Activated naive CD4-positive, alpha-beta T cell treated with anti-CD3 and anti-CD28 coated beads for 36 hours (primary cell): ENCODE measurements at regions of chr21 and their contacts with region 1.

Region 1: DNA sequence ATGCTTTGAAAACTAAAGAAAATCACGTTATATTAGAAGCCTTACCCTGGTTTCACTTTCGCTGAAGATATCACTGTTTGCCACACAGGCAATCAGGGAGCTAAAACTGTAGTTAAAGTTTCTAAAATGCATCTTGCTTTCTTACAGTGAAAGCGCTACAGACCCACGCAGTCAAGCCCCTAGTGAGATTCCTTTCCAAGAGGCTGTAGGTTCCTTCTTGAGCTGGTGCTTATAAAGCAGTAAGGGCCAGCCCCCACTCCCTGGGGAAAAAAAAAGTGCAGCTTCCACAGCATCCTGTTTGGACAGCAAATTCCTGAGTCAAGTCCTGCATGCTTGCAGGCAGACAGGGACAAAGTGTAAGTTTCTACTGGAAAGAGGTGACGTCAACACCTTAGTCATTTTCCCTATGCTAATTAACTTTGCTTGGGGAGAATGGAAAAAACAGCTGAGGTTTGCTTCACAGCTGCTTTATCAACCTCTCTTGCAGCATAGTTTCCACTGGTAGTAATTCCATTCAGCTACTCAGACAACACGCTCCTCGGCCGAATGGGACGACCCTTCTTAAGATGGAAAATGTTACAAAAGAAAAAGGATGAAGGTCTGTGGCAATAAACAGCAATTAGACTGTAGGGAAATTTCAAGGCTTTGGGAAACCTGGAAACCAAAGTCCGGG is 14.7 kb upstream of the KCNE1 start:
- DNase-seq: peak; percentile 57
- H3K4me3 Mint-ChIP-seq: peak overlapping the region; percentile 55
- H3K27ac Mint-ChIP-seq: peak overlapping the region; percentile 56
- H3K4me1 Mint-ChIP-seq: peaks cover 30% of the 10 kb centered on the region
- H3K27me3 Mint-ChIP-seq: no peaks in the 10 kb centered on the region

Region 2: DNA sequence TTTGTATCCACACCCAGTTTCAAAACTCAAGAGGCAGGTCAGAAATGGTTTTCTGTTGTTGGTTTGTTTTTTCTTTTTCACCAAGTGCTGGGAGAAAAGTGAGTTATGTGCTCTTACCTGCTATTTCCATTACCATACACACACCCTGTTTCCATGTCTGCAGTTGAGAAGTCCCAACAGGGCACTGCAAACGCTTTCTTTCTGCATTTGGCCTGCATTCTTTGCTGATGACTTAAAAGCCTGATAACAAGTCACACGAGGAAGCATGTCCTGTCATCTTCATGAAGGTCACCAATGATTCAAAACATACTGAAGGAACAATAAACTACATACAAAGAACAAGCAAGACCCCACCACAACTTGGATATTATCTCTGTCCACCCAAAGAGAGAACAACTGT is 10.1 kb after region 1 on chr21:
- CTCF ChIA-PET with region 1: no interaction called
- intact Hi-C with region 1: no loop called
- DNase-seq: no peak
- H3K4me3 Mint-ChIP-seq: no peak overlapping the region
- H3K27ac Mint-ChIP-seq: no peak overlapping the region
- H3K4me1 Mint-ChIP-seq: no peaks in the 10 kb centered on the region
- H3K27me3 Mint-ChIP-seq: no peaks in the 10 kb centered on the region

Region 3: GRCh38 chr21:34582506-34583150 is 55.9 kb after region 1 on chr21:
- CTCF ChIA-PET with region 1: interaction called, 6 read pairs
- intact Hi-C with region 1: loop called (anchors 5 kb)
- DNase-seq: peak; percentile 17
- H3K4me3 Mint-ChIP-seq: no peak overlapping the region
- H3K27ac Mint-ChIP-seq: no peak overlapping the region
- H3K4me1 Mint-ChIP-seq: peaks cover 5% of the 10 kb centered on the region
- H3K27me3 Mint-ChIP-seq: no peaks in the 10 kb centered on the region

Region 4: GRCh38 chr21:34639882-34640788 is 113.4 kb after region 1 on chr21:
- CTCF ChIA-PET with region 1: no interaction called
- intact Hi-C with region 1: loop called (anchors 1 kb)
- DNase-seq: peak; percentile 48
- H3K4me3 Mint-ChIP-seq: no peak overlapping the region
- H3K27ac Mint-ChIP-seq: peak overlapping the region; percentile 16
- H3K4me1 Mint-ChIP-seq: peaks cover 18% of the 10 kb centered on the region
- H3K27me3 Mint-ChIP-seq: no peaks in the 10 kb centered on the region